K562 (cell line): ENCODE measurements at regions of chr1 and their contacts with region 1.

Region 1: DNA sequence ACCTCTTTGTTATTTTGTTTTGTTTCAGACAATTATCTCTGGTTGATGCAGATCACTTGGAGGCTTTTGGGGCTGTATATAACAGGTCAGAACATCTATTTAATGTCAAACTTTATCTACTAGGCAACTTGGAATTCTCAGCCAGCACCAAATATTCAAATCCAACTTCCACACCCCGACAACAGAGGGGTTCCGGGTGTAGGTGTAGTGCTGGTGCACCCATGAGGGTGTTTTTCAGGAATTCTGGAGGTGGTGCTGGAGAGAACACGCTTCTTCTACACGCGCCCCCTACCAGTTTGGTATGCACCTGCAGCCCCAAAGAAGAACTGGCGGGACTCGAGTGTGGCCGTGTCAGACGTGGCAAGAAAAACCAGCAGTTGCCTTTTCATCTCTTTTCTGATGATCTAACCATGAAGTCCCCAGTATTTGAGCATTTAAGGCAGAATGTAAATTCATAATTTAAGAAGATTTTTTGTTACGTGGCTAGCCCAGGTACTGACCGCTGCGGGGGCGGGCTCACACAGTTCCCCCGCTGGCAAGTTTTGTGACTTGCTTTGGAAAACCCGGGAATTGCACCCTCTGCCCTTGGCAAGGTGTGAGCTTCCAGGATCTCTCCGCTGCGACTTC is 462 bp upstream of the TLCD4 start:
- DNase-seq: peak; percentile 64 to 89 (median 74)
- ATAC-seq: peak; percentile 76
- H3K4me3 ChIP-seq: peak overlapping the region; percentile 83
- H3K27ac ChIP-seq: peak overlapping the region; percentile 81
- H3K4me1 ChIP-seq: peaks cover 17 to 42% of the 10 kb centered on the region in 2 experiments; a peak in 4 of 5 replicates
- H3K27me3 ChIP-seq: no peaks in the 10 kb centered on the region
- CTCF ChIP-seq: peak; percentile 87 to 92 (median 90)
- EP300 ChIP-seq: no peak
- POLR2A ChIP-seq: no peak
- RAD21 ChIP-seq: peak; percentile 24 to 61; a peak in 3 of 4 replicates

Region 2: GRCh38 chr1:95072532-95073419 is 43.9 kb before region 1 on chr1 and contains the start of gene ALG14:
- CTCF ChIA-PET with region 1: no interaction called
- POLR2A ChIA-PET with region 1: interaction called, 4 read pairs
- in situ Hi-C with region 1: no loop called
- intact Hi-C with region 1: loop called (anchors 2 kb)
- DNase-seq: peak; percentile 86 to 97 (median 90)
- ATAC-seq: peak; percentile 99
- H3K4me3 ChIP-seq: peak within 1 kb of the TSS; percentile 54
- H3K27ac ChIP-seq: peak within 1 kb of the TSS; percentile 66
- H3K4me1 ChIP-seq: peaks cover 0 to 5% of the 10 kb centered on the region in 2 experiments; a peak in 2 of 5 replicates
- H3K27me3 ChIP-seq: no peaks in the 10 kb centered on the region
- CTCF ChIP-seq: no peak
- EP300 ChIP-seq: no peak
- POLR2A ChIP-seq: peak; percentile 83
- RAD21 ChIP-seq: peak in 1 of 2 experiments; percentile 17; a peak in 1 of 4 replicates
- polyA plus RNA-seq, gene ALG14: 14.9 to 16.2 TPM

Region 3: GRCh38 chr1:95127380-95127779 is 10.7 kb after region 1 on chr1:
- CTCF ChIA-PET with region 1: no interaction called
- POLR2A ChIA-PET with region 1: interaction called, 26 read pairs
- in situ Hi-C with region 1: no loop called
- intact Hi-C with region 1: no loop called
- DNase-seq: no peak
- ATAC-seq: peak; percentile 31; the same call in 2 of the 3 replicates
- H3K4me3 ChIP-seq: no peak overlapping the region
- H3K27ac ChIP-seq: no peak overlapping the region
- H3K4me1 ChIP-seq: peaks cover 5 to 6% of the 10 kb centered on the region in 2 experiments; a peak in 4 of 5 replicates
- H3K27me3 ChIP-seq: no peaks in the 10 kb centered on the region
- CTCF ChIP-seq: no peak
- EP300 ChIP-seq: no peak
- POLR2A ChIP-seq: no peak
- RAD21 ChIP-seq: no peak

Region 4: GRCh38 chr1:95179205-95179986 is 62.7 kb after region 1 on chr1:
- CTCF ChIA-PET with region 1: no interaction called
- POLR2A ChIA-PET with region 1: interaction called, 6 read pairs
- in situ Hi-C with region 1: no loop called
- intact Hi-C with region 1: loop called (anchors 2 kb)
- DNase-seq: peak; percentile 74 to 92 (median 86)
- ATAC-seq: peak; percentile 98
- H3K4me3 ChIP-seq: no peak overlapping the region
- H3K27ac ChIP-seq: peak overlapping the region; percentile 64
- H3K4me1 ChIP-seq: peaks cover 14 to 20% of the 10 kb centered on the region in 2 experiments; a peak in 4 of 5 replicates
- H3K27me3 ChIP-seq: no peaks in the 10 kb centered on the region
- CTCF ChIP-seq: 0 out of 6 replicates have a peak, but pooled peaks of 1 of the 3 experiments have one; percentile 2
- EP300 ChIP-seq: peak; percentile 82
- POLR2A ChIP-seq: no peak
- RAD21 ChIP-seq: 0 out of 4 replicates have a peak, but pooled peaks of 1 of the 2 experiments have one; percentile 11